ENCODE measurements at regions of chr20 and their contacts with region 1.

Region 1: DNA sequence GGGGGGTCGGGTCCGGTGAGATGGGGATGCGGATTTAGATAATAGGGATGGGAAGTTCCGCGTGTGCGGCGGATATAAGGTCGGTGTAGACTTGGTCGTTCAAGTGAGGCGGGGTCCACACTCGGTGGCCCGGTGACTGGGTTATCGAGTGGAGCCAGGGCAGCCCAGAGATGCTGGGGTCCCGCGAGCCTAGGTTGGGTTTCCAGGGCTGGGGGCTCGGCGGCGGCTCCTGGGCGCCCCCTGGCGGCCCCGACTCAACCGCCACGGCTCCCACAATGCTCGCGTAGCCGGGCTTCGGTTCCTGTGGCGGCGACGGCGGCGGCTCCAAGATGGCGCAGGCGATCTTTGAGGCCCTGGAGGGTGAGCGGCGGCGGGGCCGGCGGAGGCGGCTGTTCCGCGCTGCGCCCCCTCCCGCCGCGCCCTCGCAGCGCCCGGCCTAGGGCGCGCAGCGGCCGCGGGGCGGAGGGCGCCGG is at the start of gene ZNF341:
- DNase-seq: peak; percentile 93
- H3K4me3 ChIP-seq: peak within 1 kb of the TSS; percentile 44 to 76 (median 64)
- H3K27ac ChIP-seq: peak within 1 kb of the TSS; percentile 88 to 92 (median 91)
- H3K4me1 ChIP-seq: peaks cover 0 to 29% (median 27%) of the 10 kb centered on the region in 4 donors
- H3K27me3 ChIP-seq: no peaks in the 10 kb centered on the region
- CTCF ChIP-seq: peak; percentile 78 to 91 (median 84)
- EP300 ChIP-seq: no peak
- POLR2A ChIP-seq: no peak
- total RNA-seq, gene ZNF341: 1.2 to 2.5 (median 1.7) TPM

Region 2: GRCh38 chr20:33337531-33338165 is 394.1 kb before region 1 on chr20:
- intact Hi-C with region 1: no loop called
- DNase-seq: no peak
- H3K4me3 ChIP-seq: no peak overlapping the region
- H3K27ac ChIP-seq: no peak overlapping the region
- H3K4me1 ChIP-seq: no peaks in the 10 kb centered on the region
- H3K27me3 ChIP-seq: peaks cover 0 to 6% (median 3%) of the 10 kb centered on the region in 3 donors
- CTCF ChIP-seq: no peak
- EP300 ChIP-seq: no peak
- POLR2A ChIP-seq: no peak

Region 3: DNA sequence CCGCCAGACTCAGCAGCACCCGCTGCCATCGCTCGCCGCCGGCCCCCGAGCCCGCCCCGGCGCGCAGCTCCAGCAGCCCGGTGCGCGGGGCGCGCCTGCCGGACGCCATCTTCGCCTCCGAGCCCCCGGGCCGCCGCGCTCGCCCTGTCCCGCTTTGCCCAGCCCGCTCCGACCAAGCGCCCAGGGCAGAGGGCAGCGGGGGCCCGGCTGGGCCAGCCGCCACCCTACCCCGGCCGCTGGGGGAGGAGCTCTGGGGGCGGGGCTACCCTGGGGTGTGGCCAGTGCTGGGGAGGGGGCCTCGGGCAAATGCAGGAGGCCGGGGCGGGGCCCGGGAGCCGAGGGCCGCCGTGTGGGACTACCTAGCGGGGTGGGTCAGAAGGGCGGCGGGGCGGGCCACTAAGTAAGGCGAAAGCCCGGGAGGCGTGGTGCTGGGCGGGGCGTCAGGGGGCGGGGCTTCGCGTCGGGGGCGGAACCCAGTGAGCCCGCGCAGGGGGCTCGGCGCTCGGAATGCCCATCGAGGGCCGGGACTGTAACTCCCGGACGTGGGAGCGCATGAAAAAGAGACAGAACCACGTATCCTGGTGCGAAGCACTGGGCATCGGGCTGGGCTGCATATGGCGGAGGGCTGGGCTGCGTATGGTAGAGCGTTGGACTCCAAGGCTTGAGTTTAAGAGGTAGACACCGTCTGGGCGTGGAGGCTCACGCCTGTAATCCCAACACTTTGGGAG is 288.1 kb before region 1 on chr20 and contains the start of gene SNTA1:
- intact Hi-C with region 1: loop called (anchors 10 kb)
- DNase-seq: peak; percentile 96
- H3K4me3 ChIP-seq: peak within 1 kb of the TSS; percentile 53 to 86 (median 84)
- H3K27ac ChIP-seq: peak within 1 kb of the TSS; percentile 83 to 91 (median 86)
- H3K4me1 ChIP-seq: peaks cover 0 to 25% (median 14%) of the 10 kb centered on the region in 4 donors
- H3K27me3 ChIP-seq: no peaks in the 10 kb centered on the region
- CTCF ChIP-seq: no peak
- EP300 ChIP-seq: no peak
- POLR2A ChIP-seq: no peak
- total RNA-seq, gene SNTA1: 29.3 to 42.7 (median 33.4) TPM

Region 4: DNA sequence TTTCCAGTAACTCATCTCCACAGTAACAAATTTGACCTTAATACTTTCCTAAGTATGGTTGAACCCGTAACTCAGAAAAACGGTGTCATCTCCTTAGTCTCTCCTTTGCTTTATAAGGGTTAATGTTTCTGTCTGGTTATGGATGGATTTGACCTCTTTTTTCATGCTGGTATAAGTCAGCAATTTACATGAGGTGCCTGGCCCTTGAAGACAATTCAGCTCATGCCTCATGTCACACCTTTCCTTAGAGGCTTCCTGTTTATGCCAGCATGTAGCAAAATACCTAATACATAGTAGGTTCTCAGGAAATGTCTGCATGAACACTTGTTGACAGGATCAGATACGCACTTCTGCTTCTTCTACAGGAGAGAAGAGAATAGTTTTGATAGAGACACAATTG is 107.3 kb before region 1 on chr20:
- intact Hi-C with region 1: no loop called
- DNase-seq: no peak
- H3K4me3 ChIP-seq: no peak overlapping the region
- H3K27ac ChIP-seq: no peak overlapping the region
- H3K4me1 ChIP-seq: no peaks in the 10 kb centered on the region
- H3K27me3 ChIP-seq: no peaks in the 10 kb centered on the region
- CTCF ChIP-seq: no peak
- EP300 ChIP-seq: no peak
- POLR2A ChIP-seq: no peak

Region 5: DNA sequence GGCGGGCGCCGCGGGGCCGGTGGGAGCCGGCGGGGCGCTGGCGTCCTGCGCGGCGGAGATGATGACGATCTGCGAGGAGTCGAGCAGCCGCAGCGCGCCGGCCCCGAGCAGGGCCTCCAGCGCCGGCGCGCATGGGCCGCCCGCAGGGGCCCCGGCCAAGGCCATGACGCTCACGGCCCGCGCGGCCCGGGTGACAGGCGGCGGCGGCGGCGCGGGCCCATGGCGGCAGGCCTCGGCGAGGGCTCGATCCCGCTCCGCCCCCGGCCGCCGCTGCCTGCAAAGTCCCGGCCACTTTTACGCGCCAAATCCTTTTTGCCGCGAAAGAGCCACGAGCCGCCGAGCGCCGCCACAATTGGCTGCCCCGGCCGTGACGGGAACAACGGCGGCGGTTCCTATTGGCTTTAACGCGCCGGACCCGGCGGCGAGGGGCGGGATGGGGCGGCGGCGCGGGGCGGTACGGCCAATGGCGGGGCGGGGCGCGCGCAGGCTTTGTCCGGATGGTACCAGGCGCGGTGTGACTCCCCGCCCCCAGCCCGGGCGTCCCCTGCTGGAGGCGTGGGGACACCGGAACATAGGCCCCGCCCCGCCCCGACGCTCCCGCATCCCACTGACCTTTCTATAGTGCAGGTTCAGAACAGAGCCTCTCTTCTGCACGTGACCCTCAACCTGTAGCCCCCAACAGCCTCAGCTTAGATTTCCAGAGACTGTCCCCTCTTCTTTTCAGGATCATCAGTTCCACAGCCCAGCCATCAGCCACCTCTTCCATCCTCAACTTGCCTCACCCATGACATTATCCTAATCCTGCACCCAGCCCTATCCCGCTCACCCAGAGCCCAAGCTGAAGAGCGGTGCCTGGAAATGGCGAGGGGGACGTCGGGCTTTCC is 45.4 kb before region 1 on chr20 and contains the start of gene E2F1:
- intact Hi-C with region 1: loop called (anchors 5 kb)
- DNase-seq: peak; percentile 97
- H3K4me3 ChIP-seq: peak within 1 kb of the TSS in 3 of 4 donors; percentile 44 to 51 (median 50)
- H3K27ac ChIP-seq: peak within 1 kb of the TSS; percentile 51 to 65 (median 62)
- H3K4me1 ChIP-seq: peaks cover 0 to 19% (median 15%) of the 10 kb centered on the region in 4 donors
- H3K27me3 ChIP-seq: no peaks in the 10 kb centered on the region
- CTCF ChIP-seq: peak in 2 of 4 experiments; percentile 30 to 47
- EP300 ChIP-seq: no peak
- POLR2A ChIP-seq: no peak
- total RNA-seq, gene E2F1: 0.33 to 1.7 (median 0.83) TPM

Region 6: DNA sequence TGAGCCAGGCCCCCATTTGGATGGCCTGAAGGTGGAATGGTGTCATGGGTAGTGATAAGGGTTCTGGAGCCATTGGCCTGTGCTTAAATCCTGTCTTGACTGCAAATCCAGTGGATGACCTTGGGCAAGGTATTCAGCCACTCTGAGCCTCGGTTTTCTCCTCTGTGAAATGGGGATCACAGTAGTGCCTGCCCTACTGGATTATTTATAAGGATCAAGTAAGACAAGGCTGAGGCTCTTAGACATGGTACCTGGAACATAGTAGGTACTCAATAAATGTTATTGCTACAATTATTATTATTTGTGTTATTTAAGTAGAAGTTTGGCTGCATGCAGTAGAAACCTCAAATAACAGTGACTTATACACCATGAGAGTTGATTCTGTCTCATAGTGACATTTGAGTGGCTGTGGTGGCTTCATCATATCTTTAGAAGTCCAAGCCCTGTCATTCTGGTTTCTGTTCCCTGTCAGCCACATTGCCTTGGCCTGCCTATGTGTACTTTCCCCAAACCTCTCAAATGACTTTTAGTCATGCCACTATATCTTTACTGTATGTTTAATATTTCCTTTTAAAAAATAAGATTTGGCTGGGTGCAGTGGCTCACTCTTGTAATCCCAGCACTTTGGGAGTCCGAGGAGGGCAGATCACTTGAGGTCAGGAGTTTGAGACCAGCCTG is 41.8 kb after region 1 on chr20:
- intact Hi-C with region 1: no loop called
- DNase-seq: no peak
- H3K4me3 ChIP-seq: no peak overlapping the region
- H3K27ac ChIP-seq: no peak overlapping the region
- H3K4me1 ChIP-seq: no peaks in the 10 kb centered on the region
- H3K27me3 ChIP-seq: no peaks in the 10 kb centered on the region
- CTCF ChIP-seq: no peak
- EP300 ChIP-seq: no peak
- POLR2A ChIP-seq: no peak

Region 7: GRCh38 chr20:33791959-33792597 is 60.3 kb after region 1 on chr20:
- intact Hi-C with region 1: loop called (anchors 2 kb)
- DNase-seq: peak; percentile 82
- H3K4me3 ChIP-seq: no peak overlapping the region
- H3K27ac ChIP-seq: peak overlapping the region in 3 of 4 donors; percentile 88 to 89 (median 88)
- H3K4me1 ChIP-seq: peaks cover 0 to 63% (median 62%) of the 10 kb centered on the region in 4 donors
- H3K27me3 ChIP-seq: no peaks in the 10 kb centered on the region
- CTCF ChIP-seq: peak; percentile 57 to 81 (median 76)
- EP300 ChIP-seq: no peak
- POLR2A ChIP-seq: no peak

Measured in sigmoid colon (tissue), 7 donors.